ENCODE measurements at regions of chr12 and their contacts with region 1.

Region 1: DNA sequence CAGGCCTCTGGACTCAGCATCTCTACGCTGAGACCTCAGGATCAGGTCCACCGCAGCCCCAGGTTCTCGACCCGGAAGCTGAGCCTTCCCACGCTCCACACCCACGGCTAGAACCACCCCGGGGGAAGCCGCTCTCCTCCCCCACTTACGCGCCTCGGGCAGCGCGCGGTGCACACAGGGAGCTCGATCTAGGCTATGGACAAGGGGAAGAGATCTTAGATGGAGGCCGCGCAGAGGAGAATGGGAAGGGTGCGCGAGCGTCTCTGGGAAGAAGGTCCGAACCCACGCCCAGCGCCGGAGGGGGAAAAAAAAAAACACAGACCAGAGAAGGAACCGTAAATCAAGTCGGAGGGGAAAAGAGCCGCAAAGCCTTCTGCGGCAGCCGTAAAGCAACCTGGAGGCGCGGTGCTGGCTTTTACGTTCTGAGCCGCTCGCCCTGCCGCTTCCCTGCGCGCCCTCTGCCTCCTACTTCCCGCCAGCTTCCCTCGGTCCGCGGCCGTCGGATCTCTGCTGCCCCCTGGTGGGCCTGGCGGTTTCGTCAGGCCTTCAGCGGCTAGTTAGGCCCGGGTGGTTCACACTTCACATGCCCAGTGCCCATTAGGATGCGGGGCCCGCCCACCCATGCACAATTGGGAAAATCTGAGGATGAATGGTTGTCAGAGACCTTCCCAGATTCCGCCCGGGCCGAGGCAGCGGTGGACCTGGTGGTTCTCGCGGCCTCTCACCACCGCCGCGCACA is at the start of gene RAD52:
- DNase-seq: peak; percentile 96 to 97 (median 96)
- H3K4me3 ChIP-seq: peak within 1 kb of the TSS; percentile 70 to 98
- H3K4me3 Mint-ChIP-seq: peak within 1 kb of the TSS; percentile 92 to 97 (median 95)
- H3K27ac ChIP-seq: peak within 1 kb of the TSS; percentile 75
- H3K27ac Mint-ChIP-seq: peak within 1 kb of the TSS; percentile 93 to 96 (median 94)
- H3K4me1 ChIP-seq: peaks cover 22% of the 10 kb centered on the region
- H3K4me1 Mint-ChIP-seq: peaks cover 18 to 41% (median 28%) of the 10 kb centered on the region in 4 donors
- H3K27me3 ChIP-seq: no peaks in the 10 kb centered on the region
- H3K27me3 Mint-ChIP-seq: no peaks in the 10 kb centered on the region
- total RNA-seq, gene RAD52: 30.7 to 31.5 TPM

Region 2: DNA sequence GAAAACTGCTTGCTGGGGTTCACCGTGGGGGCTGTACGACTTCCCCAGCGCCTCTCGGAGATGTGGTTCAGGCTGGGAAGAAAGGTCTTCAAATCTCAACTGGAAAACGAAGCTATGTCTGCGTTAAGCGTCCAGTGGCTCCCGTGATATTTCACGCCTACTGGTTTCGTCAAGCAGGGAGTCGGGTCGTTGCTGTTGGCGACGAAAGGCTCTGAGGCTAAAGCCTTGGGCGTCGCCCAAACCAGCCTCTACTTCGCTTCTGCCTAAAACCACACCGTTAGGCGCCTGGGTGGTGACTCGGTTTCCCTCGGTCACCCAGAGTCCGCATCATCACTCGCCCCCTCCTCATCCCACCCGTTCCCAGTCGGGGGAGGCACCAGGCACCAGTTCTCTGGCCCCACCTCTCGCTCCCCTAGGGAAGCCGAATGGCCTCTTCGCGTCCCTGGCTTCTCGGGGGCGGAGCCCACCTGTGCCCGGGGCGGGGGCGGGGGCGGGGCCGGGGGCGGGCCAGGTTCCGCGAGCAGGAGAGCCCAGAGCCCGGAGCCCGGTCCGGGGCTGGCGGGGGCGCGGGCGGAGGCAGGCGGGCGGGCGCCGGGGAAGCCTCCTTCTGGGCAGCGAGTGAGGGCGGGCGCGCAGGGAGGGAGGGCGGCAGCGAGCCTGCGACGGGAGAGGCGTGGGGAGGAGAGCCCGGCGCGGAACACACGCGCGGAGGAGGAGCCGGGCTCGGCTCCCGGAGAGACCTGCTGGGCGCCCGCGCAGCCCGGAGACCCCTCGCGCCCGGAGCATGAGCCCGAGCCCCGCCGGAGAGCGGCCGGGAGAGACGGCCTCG is 490.0 kb before region 1 on chr12 and contains the start of gene B4GALNT3:
- CTCF ChIA-PET with region 1: interaction called, 5 read pairs
- POLR2A ChIA-PET with region 1: no interaction called
- intact Hi-C with region 1: loop called (anchors 10 kb)
- DNase-seq: peak; percentile 42 to 62 (median 43)
- H3K4me3 ChIP-seq: peak within 1 kb of the TSS; percentile 58 to 72
- H3K4me3 Mint-ChIP-seq: peak within 1 kb of the TSS; percentile 79 to 92 (median 86)
- H3K27ac ChIP-seq: no peak within 1 kb of the TSS
- H3K27ac Mint-ChIP-seq: peak within 1 kb of the TSS in 5 of 7 donors; percentile 22 to 77 (median 69)
- H3K4me1 ChIP-seq: peaks cover 9% of the 10 kb centered on the region
- H3K4me1 Mint-ChIP-seq: peaks cover 17 to 42% (median 22%) of the 10 kb centered on the region in 4 donors
- H3K27me3 ChIP-seq: no peaks in the 10 kb centered on the region
- H3K27me3 Mint-ChIP-seq: peaks cover 0 to 3% of the 10 kb centered on the region in 2 donors
- total RNA-seq, gene B4GALNT3: 2.1 to 2.6 TPM

Region 3: DNA sequence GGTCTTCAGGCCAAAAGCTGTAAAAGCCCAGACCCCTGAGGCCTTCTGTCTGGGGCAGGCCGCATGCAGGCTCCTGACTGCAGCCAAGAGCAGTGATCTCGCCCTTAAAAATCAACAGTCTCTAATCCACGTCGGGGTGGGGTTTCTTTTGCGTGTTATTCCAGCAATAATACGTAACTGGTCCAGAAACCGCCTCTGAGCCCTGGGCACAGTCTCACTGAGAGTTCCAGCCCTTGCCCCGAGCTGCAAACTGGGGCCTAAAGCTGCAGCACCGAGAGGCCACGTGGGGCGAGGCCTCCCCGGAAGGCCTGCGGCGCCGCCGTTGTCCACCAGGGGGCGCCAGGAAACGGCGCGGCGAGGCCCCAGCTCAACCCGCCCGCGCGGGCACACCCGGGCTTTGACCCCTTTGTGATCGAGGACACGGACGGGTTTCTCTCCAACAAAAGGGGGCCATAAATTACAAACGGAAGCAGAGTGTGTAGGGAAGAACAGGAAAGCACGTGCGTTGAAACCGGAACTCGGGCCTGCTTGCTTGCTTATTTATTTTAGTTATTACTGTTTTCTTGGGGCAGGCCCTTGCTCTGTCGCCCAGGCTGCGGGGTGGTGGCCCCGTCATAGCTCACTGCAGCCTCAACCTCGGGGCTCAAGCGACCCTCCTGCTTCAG is 373.5 kb before region 1 on chr12:
- CTCF ChIA-PET with region 1: interaction called, 26 read pairs
- POLR2A ChIA-PET with region 1: interaction called, 13 read pairs
- intact Hi-C with region 1: no loop called
- DNase-seq: peak; percentile 71 to 89 (median 82)
- H3K4me3 ChIP-seq: peak overlapping the region in 1 of 2 donors; percentile 38
- H3K4me3 Mint-ChIP-seq: peak overlapping the region in 7 of 8 donors; percentile 12 to 74 (median 68)
- H3K27ac ChIP-seq: no peak overlapping the region
- H3K27ac Mint-ChIP-seq: peak overlapping the region in 6 of 7 donors; percentile 65 to 92 (median 79)
- H3K4me1 ChIP-seq: peaks cover 15% of the 10 kb centered on the region
- H3K4me1 Mint-ChIP-seq: peaks cover 6 to 23% (median 14%) of the 10 kb centered on the region in 4 donors
- H3K27me3 ChIP-seq: no peaks in the 10 kb centered on the region
- H3K27me3 Mint-ChIP-seq: no peaks in the 10 kb centered on the region

Region 4: GRCh38 chr12:846421-846820 is 103.2 kb before region 1 on chr12:
- CTCF ChIA-PET with region 1: no interaction called
- POLR2A ChIA-PET with region 1: no interaction called
- intact Hi-C with region 1: no loop called
- DNase-seq: no peak
- H3K4me3 ChIP-seq: no peak overlapping the region
- H3K4me3 Mint-ChIP-seq: no peak overlapping the region
- H3K27ac ChIP-seq: no peak overlapping the region
- H3K27ac Mint-ChIP-seq: no peak overlapping the region
- H3K4me1 ChIP-seq: peaks cover 40% of the 10 kb centered on the region
- H3K4me1 Mint-ChIP-seq: peaks cover 41 to 63% (median 51%) of the 10 kb centered on the region in 4 donors
- H3K27me3 ChIP-seq: no peaks in the 10 kb centered on the region
- H3K27me3 Mint-ChIP-seq: no peaks in the 10 kb centered on the region

Region 5: GRCh38 chr12:884746-885414 is 64.7 kb before region 1 on chr12:
- CTCF ChIA-PET with region 1: no interaction called
- POLR2A ChIA-PET with region 1: no interaction called
- intact Hi-C with region 1: loop called (anchors 5 kb)
- DNase-seq: no peak
- H3K4me3 ChIP-seq: no peak overlapping the region
- H3K4me3 Mint-ChIP-seq: no peak overlapping the region
- H3K27ac ChIP-seq: no peak overlapping the region
- H3K27ac Mint-ChIP-seq: peak overlapping the region in 6 of 7 donors; percentile 10 to 79 (median 52)
- H3K4me1 ChIP-seq: no peaks in the 10 kb centered on the region
- H3K4me1 Mint-ChIP-seq: peaks cover 0 to 3% (median 0%) of the 10 kb centered on the region in 4 donors
- H3K27me3 ChIP-seq: no peaks in the 10 kb centered on the region
- H3K27me3 Mint-ChIP-seq: no peaks in the 10 kb centered on the region

Region 6: GRCh38 chr12:936377-937345 is 13.0 kb before region 1 on chr12:
- CTCF ChIA-PET with region 1: interaction called, 14 read pairs
- POLR2A ChIA-PET with region 1: interaction called, 10 read pairs
- intact Hi-C with region 1: no loop called
- DNase-seq: no peak
- H3K4me3 ChIP-seq: no peak overlapping the region
- H3K4me3 Mint-ChIP-seq: no peak overlapping the region
- H3K27ac ChIP-seq: no peak overlapping the region
- H3K27ac Mint-ChIP-seq: peak overlapping the region in 1 of 7 donors; percentile 66
- H3K4me1 ChIP-seq: no peaks in the 10 kb centered on the region
- H3K4me1 Mint-ChIP-seq: peaks cover 5 to 21% (median 8%) of the 10 kb centered on the region in 4 donors
- H3K27me3 ChIP-seq: no peaks in the 10 kb centered on the region
- H3K27me3 Mint-ChIP-seq: no peaks in the 10 kb centered on the region

Region 7: GRCh38 chr12:1217191-1217949 is 267.7 kb after region 1 on chr12:
- CTCF ChIA-PET with region 1: no interaction called
- POLR2A ChIA-PET with region 1: no interaction called
- intact Hi-C with region 1: no loop called
- DNase-seq: no peak
- H3K4me3 ChIP-seq: no peak overlapping the region
- H3K4me3 Mint-ChIP-seq: no peak overlapping the region
- H3K27ac ChIP-seq: no peak overlapping the region
- H3K27ac Mint-ChIP-seq: no peak overlapping the region
- H3K4me1 ChIP-seq: no peaks in the 10 kb centered on the region
- H3K4me1 Mint-ChIP-seq: no peaks in the 10 kb centered on the region
- H3K27me3 ChIP-seq: no peaks in the 10 kb centered on the region
- H3K27me3 Mint-ChIP-seq: no peaks in the 10 kb centered on the region

Region 8: DNA sequence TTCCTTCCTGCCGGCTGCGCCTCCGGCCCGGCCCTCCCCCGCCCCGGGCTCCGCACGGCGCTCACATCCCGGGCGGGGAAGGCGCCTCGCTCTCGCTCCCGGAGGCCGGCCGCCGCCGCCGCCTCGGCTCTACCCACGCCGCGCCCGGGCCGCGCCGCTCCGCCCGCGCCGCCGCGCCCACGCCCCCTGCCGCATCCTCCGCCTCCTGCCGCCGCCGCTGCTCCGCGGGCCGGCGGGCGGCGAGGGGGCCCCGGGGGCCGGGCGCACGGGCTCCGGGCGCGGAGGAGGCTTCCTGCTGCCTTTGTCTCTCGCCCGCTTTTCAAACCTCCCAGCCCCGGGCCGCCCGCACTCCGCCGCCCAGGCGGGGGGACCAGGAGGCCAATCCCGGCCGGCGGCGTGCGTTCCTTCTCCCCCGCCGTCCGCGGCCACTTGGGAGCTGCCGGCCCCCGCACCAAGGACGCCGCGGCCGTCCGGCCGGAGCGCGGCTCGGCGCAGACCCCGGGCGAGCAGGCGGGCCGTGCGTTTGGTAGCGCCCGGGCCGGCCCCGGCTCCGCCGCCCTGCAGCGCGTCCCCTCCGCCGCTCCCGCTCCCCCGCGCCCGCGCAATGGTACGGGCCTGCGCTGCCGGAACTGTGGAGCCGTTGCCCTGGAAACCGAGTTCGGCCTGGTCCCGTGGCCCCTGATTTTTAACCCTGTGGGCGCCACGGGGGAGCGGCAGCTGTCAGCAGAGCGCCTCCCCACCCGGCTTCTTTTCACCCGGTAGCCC is 644.8 kb after region 1 on chr12 and contains the start of gene FBXL14:
- CTCF ChIA-PET with region 1: no interaction called
- POLR2A ChIA-PET with region 1: interaction called, 6 read pairs
- intact Hi-C with region 1: loop called (anchors 5 kb)
- DNase-seq: peak; percentile 91 to 93 (median 92)
- H3K4me3 ChIP-seq: peak within 1 kb of the TSS; percentile 77 to 95
- H3K4me3 Mint-ChIP-seq: peak within 1 kb of the TSS; percentile 92 to 96 (median 94)
- H3K27ac ChIP-seq: peak within 1 kb of the TSS; percentile 68
- H3K27ac Mint-ChIP-seq: peak within 1 kb of the TSS; percentile 92 to 99 (median 98)
- H3K4me1 ChIP-seq: peaks cover 42% of the 10 kb centered on the region
- H3K4me1 Mint-ChIP-seq: peaks cover 34 to 68% (median 42%) of the 10 kb centered on the region in 4 donors
- H3K27me3 ChIP-seq: no peaks in the 10 kb centered on the region
- H3K27me3 Mint-ChIP-seq: no peaks in the 10 kb centered on the region
- total RNA-seq, gene FBXL14: 41.6 to 43.4 TPM

Measured in CD4-positive, alpha-beta memory T cell (primary cell).